ENCODE measurements at regions of chr1 and their contacts with region 1.

Region 1: DNA sequence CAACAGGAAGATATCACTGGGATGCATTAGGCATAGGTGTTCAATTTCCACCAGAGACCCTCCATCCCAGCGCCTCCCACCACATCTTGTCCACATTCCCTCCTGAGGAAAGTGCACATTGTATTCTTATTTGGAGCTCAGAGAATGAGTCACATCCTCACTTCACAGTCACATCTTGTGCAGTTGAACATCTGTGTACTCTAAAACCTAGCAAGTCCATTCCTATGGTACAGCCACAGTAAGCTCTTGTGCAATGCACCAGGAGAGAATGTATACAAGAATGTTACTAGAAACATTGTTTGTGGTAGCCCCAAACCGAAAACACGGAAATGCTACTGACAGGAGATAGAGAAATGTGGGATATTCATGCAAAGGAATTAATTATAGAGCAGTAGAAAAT is 1.6 kb upstream of the KDF1 start:
- DNase-seq: no peak
- H3K4me3 Mint-ChIP-seq: no peak overlapping the region
- H3K27ac Mint-ChIP-seq: no peak overlapping the region
- H3K4me1 Mint-ChIP-seq: peaks cover 13% of the 10 kb centered on the region
- H3K27me3 Mint-ChIP-seq: peaks cover 78% of the 10 kb centered on the region

Region 2: DNA sequence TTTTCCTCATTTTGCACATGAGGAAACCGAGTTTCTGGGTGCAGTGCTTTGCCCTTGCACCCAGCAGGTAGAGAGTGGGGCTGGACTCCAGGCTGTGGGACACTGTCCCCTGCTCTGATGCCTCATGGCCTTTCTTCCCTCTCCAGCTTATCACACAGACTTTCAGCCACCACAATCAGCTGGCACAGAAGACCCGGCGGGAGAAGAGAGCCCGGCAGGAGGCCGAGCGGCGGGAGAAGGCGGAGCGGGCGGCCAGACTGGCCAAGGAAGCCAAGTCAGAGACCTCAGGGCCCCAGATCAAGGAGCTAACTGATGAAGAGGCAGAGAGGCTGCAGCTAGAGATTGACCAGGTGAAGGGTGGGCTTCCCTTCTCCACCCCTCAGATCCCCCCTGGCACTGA is 20.5 kb before region 1 on chr1:
- CTCF ChIA-PET with region 1: no interaction called
- DNase-seq: no peak
- H3K4me3 Mint-ChIP-seq: no peak overlapping the region
- H3K27ac Mint-ChIP-seq: no peak overlapping the region
- H3K4me1 Mint-ChIP-seq: no peaks in the 10 kb centered on the region
- H3K27me3 Mint-ChIP-seq: no peaks in the 10 kb centered on the region

Region 3: DNA sequence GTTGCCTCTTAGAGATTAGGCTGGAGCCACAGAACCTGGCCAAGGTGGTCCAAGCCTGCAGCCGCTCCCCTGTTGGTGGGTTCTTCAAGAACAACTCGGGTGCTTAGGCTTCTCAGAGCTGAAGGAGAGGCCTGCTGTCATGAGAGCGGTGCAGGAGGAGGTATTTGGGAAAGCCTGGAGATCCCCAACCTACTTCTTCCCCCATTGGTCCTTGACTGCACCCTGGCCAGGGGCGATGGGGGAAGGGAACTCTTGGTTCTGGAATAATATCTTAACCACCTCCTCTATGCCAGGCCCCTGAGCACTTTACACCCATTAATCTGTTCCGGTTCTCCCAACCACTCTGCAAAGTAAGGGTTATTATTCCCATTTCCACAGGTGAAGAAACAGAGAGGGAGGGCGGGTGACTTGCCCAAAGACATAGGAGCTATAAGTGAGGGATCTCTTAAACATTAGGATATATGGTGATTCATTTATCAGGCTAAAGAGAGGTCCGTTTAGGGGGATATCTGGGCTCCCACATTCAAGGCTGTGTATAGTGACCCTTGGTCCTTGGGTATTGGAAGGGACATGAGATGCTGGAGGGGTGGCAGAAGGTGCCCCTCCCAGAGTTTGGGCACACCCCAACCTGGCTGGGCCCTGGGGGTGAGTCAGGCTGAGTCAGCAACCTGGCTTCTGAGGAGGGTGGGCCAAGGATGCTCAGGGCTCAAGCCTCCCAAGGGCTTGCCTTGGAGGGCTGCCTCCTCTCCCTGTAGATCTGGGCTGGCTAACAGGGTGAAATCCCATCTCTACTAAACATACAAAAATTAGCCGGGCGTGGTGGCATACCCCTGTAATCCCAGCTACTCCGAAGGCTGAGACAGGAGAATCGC is 36.8 kb after region 1 on chr1:
- CTCF ChIA-PET with region 1: interaction called, 14 read pairs
- DNase-seq: no peak
- H3K4me3 Mint-ChIP-seq: no peak overlapping the region
- H3K27ac Mint-ChIP-seq: no peak overlapping the region
- H3K4me1 Mint-ChIP-seq: peaks cover 8% of the 10 kb centered on the region
- H3K27me3 Mint-ChIP-seq: peaks cover 94% of the 10 kb centered on the region

Region 4: GRCh38 chr1:27071049-27071416 is 109.2 kb after region 1 on chr1:
- CTCF ChIA-PET with region 1: no interaction called
- DNase-seq: no peak
- H3K4me3 Mint-ChIP-seq: no peak overlapping the region
- H3K27ac Mint-ChIP-seq: no peak overlapping the region
- H3K4me1 Mint-ChIP-seq: no peaks in the 10 kb centered on the region
- H3K27me3 Mint-ChIP-seq: peaks cover 33% of the 10 kb centered on the region

Measured in activated naive CD4-positive, alpha-beta T cell treated with anti-CD3 and anti-CD28 coated beads, Interleukin-2, amount 10 ng/mL, durations not matched to agents 7 days and 5 days (primary cell).